ENCODE measurements at regions of chr17 and their contacts with region 1.

Region 1: DNA sequence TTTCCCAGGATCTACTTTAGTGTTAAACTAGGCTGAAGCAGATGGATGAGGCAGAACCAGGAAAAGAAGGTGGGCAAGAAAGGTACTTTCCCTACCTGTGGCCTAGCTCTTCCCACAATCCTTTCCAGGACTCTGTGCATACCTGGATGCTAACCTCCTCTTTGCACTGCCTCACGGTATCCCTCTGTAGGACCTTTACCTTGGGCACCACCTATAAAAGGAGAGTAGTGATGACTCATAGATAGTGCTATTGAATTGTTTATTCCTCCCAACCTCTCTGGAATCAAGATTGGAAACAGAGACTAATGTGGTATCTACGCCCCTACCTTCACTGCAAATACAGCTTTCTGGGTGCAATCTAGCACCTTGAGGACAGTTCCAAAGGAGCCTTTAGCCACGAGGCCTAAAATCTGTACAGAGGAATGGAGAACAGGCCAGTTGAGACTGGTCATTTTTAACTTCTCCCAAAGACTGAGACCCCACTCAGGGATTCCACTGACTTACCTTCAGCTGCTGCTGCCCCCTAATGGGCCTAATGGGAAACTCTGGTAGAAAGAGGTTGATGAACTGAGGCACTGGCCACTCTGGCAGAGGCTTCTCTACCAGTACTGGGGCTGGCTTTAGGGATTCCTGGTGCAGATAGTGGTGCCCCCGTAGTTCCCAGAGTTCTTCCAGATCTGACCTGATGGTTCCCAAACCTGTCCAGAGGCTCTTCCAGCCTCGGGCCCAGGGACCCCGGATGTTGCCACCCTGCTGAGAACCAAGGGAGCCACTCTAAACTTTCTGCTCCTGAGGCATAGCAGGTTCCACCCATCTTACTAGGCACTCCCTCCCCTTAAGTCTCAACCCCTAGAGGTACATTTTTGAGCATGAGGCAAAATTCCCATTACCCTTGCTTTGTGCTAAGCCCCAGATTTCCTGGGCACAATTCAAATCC is 781 bp downstream of the RSKR start:
- DNase-seq: peak; percentile 70
- H3K4me3 ChIP-seq: no peak overlapping the region
- H3K27ac ChIP-seq: no peak overlapping the region
- H3K4me1 ChIP-seq: no peaks in the 10 kb centered on the region
- H3K27me3 ChIP-seq: no peaks in the 10 kb centered on the region
- CTCF ChIP-seq: peak; percentile 72
- EP300 ChIP-seq: no peak
- RAD21 ChIP-seq: peak; percentile 75

Region 2: GRCh38 chr17:28571255-28572122 is 41.7 kb before region 1 on chr17 and contains the start of gene PIGS:
- CTCF ChIA-PET with region 1: interaction called, 10 read pairs
- POLR2A ChIA-PET with region 1: no interaction called
- DNase-seq: peak; percentile 98
- H3K4me3 ChIP-seq: peak within 1 kb of the TSS; percentile 82 to 95
- H3K27ac ChIP-seq: peak within 1 kb of the TSS; percentile 29 to 81; a peak in 3 of 4 replicates
- H3K4me1 ChIP-seq: peaks cover 4 to 32% of the 10 kb centered on the region in 2 experiments; a peak in 3 of 4 replicates
- H3K27me3 ChIP-seq: no peaks in the 10 kb centered on the region
- CTCF ChIP-seq: no peak
- EP300 ChIP-seq: no peak
- RAD21 ChIP-seq: no peak
- polyA plus RNA-seq, gene PIGS: 54.9 and 78.5 TPM in 2 replicates

Region 3: DNA sequence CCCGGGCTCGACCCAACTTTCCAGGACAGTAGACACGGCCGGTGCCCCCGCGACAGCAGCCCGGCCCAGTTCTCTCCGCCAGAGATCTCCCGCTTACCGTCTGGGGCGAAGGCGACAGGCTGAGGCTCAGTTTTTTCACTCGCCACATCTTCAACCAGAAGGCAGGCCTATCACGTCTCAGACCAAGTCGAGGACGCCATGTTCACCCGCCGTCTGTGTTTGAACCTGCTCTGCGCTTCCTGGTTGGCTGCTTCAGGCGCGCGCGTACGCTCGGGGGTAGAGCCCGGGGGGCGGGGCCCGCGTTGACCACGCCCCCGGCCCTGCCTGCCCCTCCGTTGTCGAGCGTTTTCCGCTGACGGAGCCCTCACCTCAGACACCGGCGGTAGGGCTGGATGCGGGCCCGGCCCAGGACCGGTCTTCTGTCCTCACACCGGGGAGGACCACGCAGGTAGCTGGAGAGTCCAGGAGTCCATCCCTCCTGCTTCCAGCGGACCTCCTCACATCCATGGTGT is 14.3 kb before region 1 on chr17 and contains the start of gene SPAG5:
- CTCF ChIA-PET with region 1: interaction called, 11 read pairs
- POLR2A ChIA-PET with region 1: interaction called, 3 read pairs
- DNase-seq: peak; percentile 99
- H3K4me3 ChIP-seq: peak within 1 kb of the TSS; percentile 65 to 83
- H3K27ac ChIP-seq: peak within 1 kb of the TSS; percentile 75 to 94
- H3K4me1 ChIP-seq: peaks cover 6 to 9% of the 10 kb centered on the region in 2 experiments; a peak in 1 of 4 replicates
- H3K27me3 ChIP-seq: no peaks in the 10 kb centered on the region
- CTCF ChIP-seq: no peak
- EP300 ChIP-seq: no peak
- RAD21 ChIP-seq: no peak
- polyA plus RNA-seq, gene SPAG5: 36.5 and 42.3 TPM in 2 replicates

Region 4: DNA sequence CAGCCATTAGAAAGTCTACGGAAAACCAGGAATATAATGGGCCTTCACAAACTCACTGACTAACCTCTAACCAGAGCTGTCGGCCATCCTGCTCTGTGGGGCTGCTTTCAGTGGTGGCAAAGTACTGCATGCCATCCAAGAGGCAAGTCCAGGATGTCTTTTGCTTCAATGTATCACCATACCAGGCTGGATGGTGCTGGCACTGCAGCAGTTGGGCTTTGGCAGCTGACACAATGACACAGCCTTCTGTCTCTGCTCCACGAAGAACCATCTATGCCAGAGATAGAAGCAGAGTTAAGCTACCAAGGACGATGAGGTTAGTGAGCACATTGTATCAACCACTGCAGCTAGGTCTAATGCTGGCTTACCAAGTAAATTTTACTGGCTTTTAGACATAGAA is 10.5 kb after region 1 on chr17:
- CTCF ChIA-PET with region 1: interaction called, 37 read pairs
- POLR2A ChIA-PET with region 1: interaction called, 4 read pairs
- DNase-seq: no peak
- H3K4me3 ChIP-seq: no peak overlapping the region
- H3K27ac ChIP-seq: no peak overlapping the region
- H3K4me1 ChIP-seq: no peaks in the 10 kb centered on the region
- H3K27me3 ChIP-seq: no peaks in the 10 kb centered on the region
- CTCF ChIP-seq: no peak
- EP300 ChIP-seq: no peak
- RAD21 ChIP-seq: no peak

Region 5: GRCh38 chr17:28644985-28645939 is 32.1 kb after region 1 on chr17 and contains the start of gene BLTP2:
- CTCF ChIA-PET with region 1: interaction called, 29 read pairs
- POLR2A ChIA-PET with region 1: interaction called, 5 read pairs
- DNase-seq: peak; percentile 99
- H3K4me3 ChIP-seq: peak within 1 kb of the TSS; percentile 89 to 95
- H3K27ac ChIP-seq: peak within 1 kb of the TSS; percentile 60 to 85
- H3K4me1 ChIP-seq: peaks cover 6 to 14% of the 10 kb centered on the region in 2 experiments; a peak in 3 of 4 replicates
- H3K27me3 ChIP-seq: no peaks in the 10 kb centered on the region
- CTCF ChIP-seq: no peak
- EP300 ChIP-seq: no peak
- RAD21 ChIP-seq: no peak
- polyA plus RNA-seq, gene BLTP2: 46.4 and 77.8 TPM in 2 replicates

Region 6: GRCh38 chr17:28842282-28843012 is 229.2 kb after region 1 on chr17 and contains the start of gene FAM222B:
- CTCF ChIA-PET with region 1: no interaction called
- POLR2A ChIA-PET with region 1: no interaction called
- DNase-seq: peak; percentile 99
- H3K4me3 ChIP-seq: peak within 1 kb of the TSS; percentile 70 to 91
- H3K27ac ChIP-seq: peak within 1 kb of the TSS; percentile 58 to 73
- H3K4me1 ChIP-seq: peaks cover 3 to 5% of the 10 kb centered on the region in 2 experiments; a peak in 1 of 4 replicates
- H3K27me3 ChIP-seq: no peaks in the 10 kb centered on the region
- CTCF ChIP-seq: no peak
- EP300 ChIP-seq: no peak
- RAD21 ChIP-seq: no peak
- polyA plus RNA-seq, gene FAM222B: 5.8 and 9.0 TPM in 2 replicates